HepG2 (cell line): ENCODE measurements at regions of chr19 and their contacts with region 1.

Region 1: GRCh38 chr19:56121180-56122167 is at the start of gene ZNF787:
- DNase-seq: peak; percentile 96
- ATAC-seq: peak; percentile 83
- H3K4me3 ChIP-seq: peak within 1 kb of the TSS; percentile 69 to 90 (median 87)
- H3K27ac ChIP-seq: peak within 1 kb of the TSS; percentile 99
- H3K4me1 ChIP-seq: peaks cover 62% of the 10 kb centered on the region
- H3K27me3 ChIP-seq: no peaks in the 10 kb centered on the region; a peak in 1 of 5 replicates
- CTCF ChIP-seq: 0 out of 2 replicates have a peak, but pooled peaks have one; percentile 34
- EP300 ChIP-seq: no peak
- POLR2A ChIP-seq: peak in 1 of 2 experiments; percentile 56; a peak in 2 of 4 replicates
- RAD21 ChIP-seq: no peak; the same call in 1 of the 2 replicates
- total RNA-seq, gene ZNF787: 35.6 and 42.8 TPM in 2 replicates

Region 2: GRCh38 chr19:56076498-56076897 is 45.0 kb before region 1 on chr19:
- CTCF ChIA-PET with region 1: no interaction called
- POLR2A ChIA-PET with region 1: no interaction called
- in situ Hi-C with region 1: no loop called
- intact Hi-C with region 1: no loop called
- DNase-seq: peak; percentile 48
- ATAC-seq: peak; percentile 49
- H3K4me3 ChIP-seq: no peak overlapping the region
- H3K27ac ChIP-seq: no peak overlapping the region
- H3K4me1 ChIP-seq: peaks cover 20% of the 10 kb centered on the region
- H3K27me3 ChIP-seq: no peaks in the 10 kb centered on the region; a peak in 1 of 5 replicates
- CTCF ChIP-seq: peak; percentile 87
- EP300 ChIP-seq: no peak
- POLR2A ChIP-seq: no peak
- RAD21 ChIP-seq: peak; percentile 63

Region 3: GRCh38 chr19:56105090-56105701 is 16.3 kb before region 1 on chr19:
- CTCF ChIA-PET with region 1: interaction called, 4 read pairs
- POLR2A ChIA-PET with region 1: interaction called, 58 read pairs
- in situ Hi-C with region 1: no loop called
- intact Hi-C with region 1: loop called (anchors 1 kb)
- DNase-seq: peak; percentile 78
- ATAC-seq: peak; percentile 84
- H3K4me3 ChIP-seq: peak overlapping the region in 1 of 3 experiments; percentile 25; a peak in 2 of 6 replicates
- H3K27ac ChIP-seq: peak overlapping the region; percentile 53
- H3K4me1 ChIP-seq: peaks cover 44% of the 10 kb centered on the region
- H3K27me3 ChIP-seq: no peaks in the 10 kb centered on the region
- CTCF ChIP-seq: peak; percentile 82
- EP300 ChIP-seq: no peak
- POLR2A ChIP-seq: no peak
- RAD21 ChIP-seq: peak; percentile 89

Region 4: DNA sequence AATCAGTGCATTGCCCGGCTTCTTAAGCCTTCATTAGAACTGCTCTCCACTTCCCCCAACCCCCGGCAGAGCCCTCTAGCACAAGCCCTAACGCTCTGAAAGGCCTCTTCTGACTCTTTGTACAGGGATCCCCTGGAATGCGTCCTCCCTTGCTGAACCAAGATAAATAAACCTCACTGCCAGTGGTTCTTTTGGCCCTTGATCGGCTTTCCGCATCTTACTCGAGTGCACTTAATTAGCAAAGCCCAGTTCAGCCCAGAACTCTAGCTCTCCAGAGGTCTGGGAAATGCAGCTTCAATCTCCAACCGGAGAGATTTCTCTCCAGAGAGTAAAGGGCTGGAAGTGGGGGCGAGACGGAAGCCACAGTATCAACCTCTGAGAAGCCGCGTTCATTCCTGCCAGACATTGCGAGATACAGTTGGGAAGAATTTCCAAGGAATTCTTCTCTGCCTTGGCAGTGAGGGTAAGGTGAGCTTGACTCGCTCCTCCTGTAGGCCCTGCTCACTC is 10.9 kb after region 1 on chr19:
- CTCF ChIA-PET with region 1: no interaction called
- POLR2A ChIA-PET with region 1: interaction called, 11 read pairs
- in situ Hi-C with region 1: no loop called
- intact Hi-C with region 1: loop called (anchors 1 kb)
- DNase-seq: peak; percentile 50
- ATAC-seq: peak; percentile 77
- H3K4me3 ChIP-seq: no peak overlapping the region; a peak in 1 of 6 replicates
- H3K27ac ChIP-seq: peak overlapping the region; percentile 45
- H3K4me1 ChIP-seq: peaks cover 38% of the 10 kb centered on the region
- H3K27me3 ChIP-seq: no peaks in the 10 kb centered on the region
- CTCF ChIP-seq: no peak
- EP300 ChIP-seq: no peak
- POLR2A ChIP-seq: no peak
- RAD21 ChIP-seq: no peak

Region 5: GRCh38 chr19:56314562-56315077 is 193.1 kb after region 1 on chr19 and contains the start of gene ZSCAN5A:
- CTCF ChIA-PET with region 1: no interaction called
- POLR2A ChIA-PET with region 1: interaction called, 8 read pairs
- in situ Hi-C with region 1: no loop called
- intact Hi-C with region 1: loop called (anchors 5 kb)
- DNase-seq: peak; percentile 89
- ATAC-seq: peak; percentile 88
- H3K4me3 ChIP-seq: peak within 1 kb of the TSS; percentile 81 to 87 (median 82)
- H3K27ac ChIP-seq: peak within 1 kb of the TSS; percentile 96
- H3K4me1 ChIP-seq: peaks cover 44% of the 10 kb centered on the region
- H3K27me3 ChIP-seq: no peaks in the 10 kb centered on the region; a peak in 1 of 5 replicates
- CTCF ChIP-seq: no peak
- EP300 ChIP-seq: peak in 1 of 2 experiments; percentile 8; a peak in 1 of 4 replicates
- POLR2A ChIP-seq: peak; percentile 50 to 65
- RAD21 ChIP-seq: 0 out of 2 replicates have a peak, but pooled peaks have one; percentile 17
- total RNA-seq, gene ZSCAN5A: 17.8 and 23.7 TPM in 2 replicates

Region 6: GRCh38 chr19:57559404-57560025 is 1438.0 kb after region 1 on chr19 and contains the start of gene ZNF550:
- CTCF ChIA-PET with region 1: no interaction called
- POLR2A ChIA-PET with region 1: no interaction called
- in situ Hi-C with region 1: no loop called
- intact Hi-C with region 1: no loop called
- DNase-seq: peak; percentile 76
- ATAC-seq: peak; percentile 99
- H3K4me3 ChIP-seq: peak within 1 kb of the TSS; percentile 88 to 99 (median 94)
- H3K27ac ChIP-seq: peak within 1 kb of the TSS; percentile 54
- H3K4me1 ChIP-seq: peaks cover 29% of the 10 kb centered on the region
- H3K27me3 ChIP-seq: no peaks in the 10 kb centered on the region; a peak in 1 of 5 replicates
- CTCF ChIP-seq: no peak
- EP300 ChIP-seq: no peak
- POLR2A ChIP-seq: peak; percentile 68 to 91
- RAD21 ChIP-seq: no peak
- total RNA-seq, gene ZNF550: 8.0 and 8.6 TPM in 2 replicates